CD14-positive monocyte (primary cell): ENCODE measurements at regions of chr17 and their contacts with region 1.

Region 1: DNA sequence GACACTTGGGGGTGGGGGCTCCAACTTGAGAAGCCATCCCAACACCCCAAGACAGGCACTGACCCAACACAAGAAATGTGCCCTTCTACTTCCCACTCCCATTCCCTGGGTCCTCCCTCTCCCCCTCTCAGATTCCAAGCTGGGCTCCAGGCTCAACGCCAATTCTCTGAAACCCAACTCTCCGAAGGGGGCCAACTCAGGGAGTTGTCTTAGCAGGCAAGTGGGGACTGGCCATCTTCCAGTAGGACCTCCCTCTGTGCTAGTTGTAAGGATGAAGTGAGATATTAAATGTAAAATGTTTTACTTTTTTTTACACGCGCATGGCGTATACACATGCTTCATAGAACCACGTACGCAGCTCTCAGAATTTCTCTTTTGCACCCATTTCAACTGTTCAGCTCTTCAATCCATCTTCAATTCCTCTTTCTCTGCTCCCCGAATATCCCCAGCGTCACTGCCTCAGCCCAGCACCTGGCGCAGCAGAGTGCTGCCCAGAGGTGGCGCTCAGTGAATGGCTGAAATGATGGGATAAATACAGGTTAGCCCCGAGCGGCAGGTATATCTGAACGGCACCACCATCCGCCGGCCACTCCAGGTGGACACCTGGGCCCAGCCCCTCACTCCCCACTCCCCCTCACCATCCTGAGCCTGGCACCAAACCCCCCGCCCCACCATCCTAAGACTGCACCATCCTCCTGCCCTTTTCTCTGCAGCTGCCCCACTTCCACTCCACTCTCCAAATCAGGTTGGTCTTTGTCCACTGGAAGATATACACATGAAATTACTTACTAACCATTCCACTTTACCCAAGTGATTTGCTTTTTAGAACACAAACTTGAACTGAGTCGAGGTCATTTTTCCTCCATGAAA is 43.9 kb upstream of the TNRC6C start:
- DNase-seq: no peak
- H3K4me3 ChIP-seq: no peak overlapping the region
- H3K4me3 Mint-ChIP-seq: peak overlapping the region in 1 of 2 donors; percentile 89
- H3K27ac ChIP-seq: no peak overlapping the region
- H3K27ac Mint-ChIP-seq: peak overlapping the region in 2 of 7 donors; percentile 11 to 74
- H3K4me1 ChIP-seq: peaks cover 18 to 19% of the 10 kb centered on the region in 2 donors
- H3K4me1 Mint-ChIP-seq: peaks cover 22% of the 10 kb centered on the region
- H3K27me3 ChIP-seq: peaks cover 41 to 68% of the 10 kb centered on the region in 2 donors
- H3K27me3 Mint-ChIP-seq: peaks cover 87 to 95% (median 94%) of the 10 kb centered on the region in 3 donors
- CTCF ChIP-seq: no peak

Region 2: GRCh38 chr17:77881545-77881944 is 33.1 kb before region 1 on chr17:
- intact Hi-C with region 1: loop called (anchors 5 kb)
- DNase-seq: peak; percentile 93 to 95 (median 95)
- H3K4me3 ChIP-seq: peak overlapping the region in 1 of 3 experiments; percentile 60
- H3K4me3 Mint-ChIP-seq: peak overlapping the region; percentile 58 to 88
- H3K27ac ChIP-seq: peak overlapping the region; percentile 51 to 87
- H3K27ac Mint-ChIP-seq: peak overlapping the region; percentile 94 to 99 (median 97)
- H3K4me1 ChIP-seq: peaks cover 56 to 64% of the 10 kb centered on the region in 2 donors
- H3K4me1 Mint-ChIP-seq: peaks cover 68% of the 10 kb centered on the region
- H3K27me3 ChIP-seq: peaks cover 0 to 13% of the 10 kb centered on the region in 2 donors
- H3K27me3 Mint-ChIP-seq: peaks cover 14 to 33% (median 25%) of the 10 kb centered on the region in 3 donors
- CTCF ChIP-seq: no peak

Region 3: DNA sequence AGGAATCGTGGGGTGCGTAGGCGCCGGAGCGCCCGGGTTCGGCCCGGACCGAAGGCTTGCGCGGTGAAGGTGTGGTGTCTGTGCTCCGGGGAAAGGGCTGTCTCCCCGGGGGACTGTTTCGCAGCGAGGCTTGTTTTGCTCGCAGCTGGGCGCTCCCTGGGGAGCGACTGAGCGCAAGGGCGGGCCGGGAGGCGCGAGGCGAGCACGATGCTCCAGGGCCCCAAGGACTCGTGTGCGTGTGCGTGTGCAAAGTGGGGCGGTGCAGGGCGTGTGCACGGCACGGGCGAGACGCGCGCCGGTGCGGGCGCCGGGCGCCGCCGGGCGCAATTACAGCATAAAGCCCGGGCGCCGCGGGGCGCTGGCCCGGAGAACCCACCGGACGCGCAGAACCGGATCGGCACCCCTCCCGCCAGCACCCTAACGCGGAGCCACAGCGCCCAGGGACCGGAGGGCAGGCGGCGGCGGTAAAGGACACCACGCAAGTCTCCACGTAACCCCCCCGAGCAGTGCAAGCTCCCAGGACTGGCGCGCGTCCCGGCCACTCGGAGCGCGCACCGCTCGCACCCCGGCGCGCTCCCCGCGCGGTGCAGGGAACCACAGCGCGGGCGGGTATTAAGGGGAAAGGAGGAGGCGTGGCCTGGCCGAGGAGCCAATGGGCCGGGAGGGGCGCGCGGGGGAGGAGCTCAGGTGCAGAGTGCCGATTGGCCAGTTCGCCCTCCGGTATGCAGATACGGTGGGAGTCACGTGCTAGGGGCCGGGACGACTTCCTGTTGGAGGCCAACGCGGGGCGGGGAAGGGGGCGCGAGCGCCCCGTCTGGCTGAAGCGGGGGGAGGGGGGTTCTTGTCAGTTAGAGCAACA is 43.5 kb after region 1 on chr17 and contains the start of gene TNRC6C:
- intact Hi-C with region 1: loop called in 1 of 2 experiments (anchors 5 kb)
- DNase-seq: peak; percentile 99
- H3K4me3 ChIP-seq: peak within 1 kb of the TSS; percentile 59 to 79 (median 74)
- H3K4me3 Mint-ChIP-seq: peak within 1 kb of the TSS; percentile 86 to 97
- H3K27ac ChIP-seq: peak within 1 kb of the TSS; percentile 5 to 72
- H3K27ac Mint-ChIP-seq: peak within 1 kb of the TSS in 6 of 7 donors; percentile 12 to 91 (median 58)
- H3K4me1 ChIP-seq: peaks cover 20 to 34% of the 10 kb centered on the region in 2 donors
- H3K4me1 Mint-ChIP-seq: peaks cover 28% of the 10 kb centered on the region
- H3K27me3 ChIP-seq: peaks cover 53 to 70% of the 10 kb centered on the region in 2 donors
- H3K27me3 Mint-ChIP-seq: peaks cover 68 to 73% (median 72%) of the 10 kb centered on the region in 3 donors
- CTCF ChIP-seq: no peak
- polyA plus RNA-seq, gene TNRC6C: 0.38 to 0.80 (median 0.46) TPM

Region 4: GRCh38 chr17:77968788-77969187 is 54.2 kb after region 1 on chr17:
- intact Hi-C with region 1: no loop called
- DNase-seq: no peak
- H3K4me3 ChIP-seq: no peak overlapping the region
- H3K4me3 Mint-ChIP-seq: no peak overlapping the region
- H3K27ac ChIP-seq: no peak overlapping the region
- H3K27ac Mint-ChIP-seq: no peak overlapping the region
- H3K4me1 ChIP-seq: no peaks in the 10 kb centered on the region
- H3K4me1 Mint-ChIP-seq: peaks cover 6% of the 10 kb centered on the region
- H3K27me3 ChIP-seq: no peaks in the 10 kb centered on the region
- H3K27me3 Mint-ChIP-seq: peaks cover 1 to 5% (median 2%) of the 10 kb centered on the region in 3 donors
- CTCF ChIP-seq: no peak